ENCODE measurements at regions of chr3 and their contacts with region 1.

Region 1: DNA sequence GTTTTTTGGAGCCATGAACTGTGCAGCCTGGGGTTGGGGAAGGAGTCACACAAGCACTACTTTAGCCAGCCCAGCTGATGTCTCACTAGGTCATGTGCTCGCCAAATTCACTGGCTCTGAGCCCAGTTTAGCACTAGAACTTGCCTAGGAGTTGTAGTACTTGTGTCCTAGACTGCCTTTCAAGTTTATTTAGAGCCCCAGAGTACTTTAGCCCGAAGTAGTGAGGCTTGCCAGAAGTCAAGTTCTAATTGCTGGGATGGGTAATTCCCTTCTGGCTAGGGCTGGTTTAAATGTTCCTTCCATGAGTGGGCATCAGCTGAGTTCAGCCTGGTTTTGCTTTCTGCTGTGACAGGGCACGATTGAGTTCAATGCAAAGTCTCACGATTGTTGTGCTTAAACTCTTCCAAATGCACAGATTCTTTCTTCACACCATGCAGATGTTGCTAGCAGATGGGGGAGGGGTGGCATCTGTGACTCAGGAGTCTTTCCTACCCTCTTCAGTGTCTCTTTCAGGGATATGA is 228.2 kb upstream of the ZPLD1 start:
- DNase-seq: peak; percentile 37 to 64
- ATAC-seq: peak; percentile 91 to 97 (median 96)
- H3K4me3 ChIP-seq: no peak overlapping the region
- H3K27ac ChIP-seq: no peak overlapping the region
- H3K4me1 ChIP-seq: peaks cover 0 to 14% (median 0%) of the 10 kb centered on the region in 9 donors
- H3K27me3 ChIP-seq: no peaks in the 10 kb centered on the region
- CTCF ChIP-seq: no peak

Region 2: DNA sequence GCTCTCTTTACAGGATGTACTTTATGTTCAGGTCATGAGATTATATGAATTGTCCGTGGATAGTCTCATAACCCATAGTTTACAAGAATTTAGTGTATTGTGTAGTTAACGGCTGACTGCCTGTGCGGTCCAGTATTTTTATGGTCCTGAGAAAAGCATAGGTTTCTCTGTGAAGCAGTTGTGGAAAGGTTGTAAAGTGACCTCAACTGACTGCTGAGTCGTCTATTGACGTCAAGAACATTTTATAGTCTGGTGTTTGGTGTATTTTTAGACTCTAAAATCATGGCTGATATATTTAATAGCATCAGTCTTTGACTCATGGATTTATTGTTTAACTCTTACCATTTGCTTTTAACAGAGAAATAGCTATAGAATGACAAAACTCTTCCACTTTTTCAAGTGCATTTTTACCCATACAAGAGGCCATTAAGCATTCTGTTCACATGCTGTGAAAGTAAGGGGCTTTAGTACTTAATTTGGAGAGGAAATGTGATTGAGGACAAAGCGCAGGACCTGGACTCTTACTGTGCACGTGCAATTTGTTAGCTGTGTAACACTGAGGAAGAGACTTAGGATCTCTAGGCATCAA is 116.6 kb before region 1 on chr3:
- intact Hi-C with region 1: loop called in 1 of 10 experiments (anchors 10 kb)
- DNase-seq: no peak
- ATAC-seq: peak in 5 of 8 donors; percentile 49 to 81 (median 61)
- H3K4me3 ChIP-seq: no peak overlapping the region
- H3K27ac ChIP-seq: no peak overlapping the region
- H3K4me1 ChIP-seq: peaks cover 0 to 17% (median 8%) of the 10 kb centered on the region in 9 donors
- H3K27me3 ChIP-seq: no peaks in the 10 kb centered on the region
- CTCF ChIP-seq: no peak